Dendritic cell treated with granulocyte-macrophage colony-stimulating factor and Interleukin-4, amounts not matched to agents 40 ng/mL and 50 ng/mL, for 4 days (primary cell): ENCODE measurements at regions of chr6 and their contacts with region 1.

Region 1: DNA sequence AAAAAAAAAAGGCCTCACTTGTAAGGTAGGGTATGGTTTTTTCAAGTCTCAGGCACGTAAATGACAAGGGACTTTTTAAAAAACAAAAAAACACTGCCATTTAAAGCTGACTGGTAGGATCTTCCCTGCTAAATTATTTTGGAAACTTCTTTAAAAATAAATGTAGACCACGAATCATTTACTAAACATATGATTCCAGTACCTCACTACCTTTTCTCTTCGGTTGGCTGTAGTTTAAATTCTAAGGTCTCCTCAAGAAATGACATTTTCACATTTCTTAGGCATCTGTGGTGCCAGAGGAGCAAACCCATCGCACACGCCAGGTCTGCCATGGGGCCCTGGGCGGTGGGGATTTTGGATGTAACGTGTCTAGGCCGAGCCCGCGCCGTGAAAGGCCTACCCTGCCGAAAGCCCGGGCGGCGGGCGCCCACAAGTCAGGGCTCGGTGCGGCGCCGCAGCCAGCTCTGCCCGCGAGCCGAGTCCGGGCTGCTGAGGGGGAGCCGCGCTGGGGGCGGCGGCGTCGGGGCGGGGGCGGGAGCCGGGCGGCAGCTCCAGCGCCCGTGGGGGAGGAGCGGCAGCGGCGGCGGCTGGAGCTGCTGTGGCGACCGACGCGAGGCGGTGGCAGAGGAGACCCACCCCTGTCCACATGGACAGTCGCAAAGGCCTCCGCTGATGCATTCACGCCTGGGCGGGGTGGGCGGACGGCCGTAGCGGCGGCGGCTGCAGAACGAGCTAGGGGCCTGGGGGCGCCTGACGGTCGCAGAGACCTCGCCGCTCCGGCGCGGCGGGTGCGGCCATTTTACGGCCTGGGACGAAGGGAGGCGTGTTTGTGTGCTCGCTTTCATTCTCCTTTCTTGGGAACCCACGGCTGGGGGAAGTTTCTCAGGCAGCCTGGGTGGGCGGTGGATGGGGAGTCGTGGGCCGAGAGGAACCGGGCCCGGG is at the start of gene SENP6:
- H3K4me3 Mint-ChIP-seq: peak within 1 kb of the TSS; percentile 93
- H3K27ac Mint-ChIP-seq: peak within 1 kb of the TSS; percentile 93
- H3K4me1 Mint-ChIP-seq: peaks cover 31% of the 10 kb centered on the region
- H3K27me3 Mint-ChIP-seq: peaks cover 2% of the 10 kb centered on the region

Region 2: GRCh38 chr6:75243333-75244062 is 358.1 kb before region 1 on chr6 and contains the start of gene COX7A2:
- intact Hi-C with region 1: loop called (anchors 10 kb)
- H3K4me3 Mint-ChIP-seq: peak within 1 kb of the TSS; percentile 98
- H3K27ac Mint-ChIP-seq: peak within 1 kb of the TSS; percentile 99
- H3K4me1 Mint-ChIP-seq: peaks cover 24% of the 10 kb centered on the region
- H3K27me3 Mint-ChIP-seq: peaks cover 11% of the 10 kb centered on the region